ENCODE measurements at regions of chr5 and their contacts with region 1.

Region 1: DNA sequence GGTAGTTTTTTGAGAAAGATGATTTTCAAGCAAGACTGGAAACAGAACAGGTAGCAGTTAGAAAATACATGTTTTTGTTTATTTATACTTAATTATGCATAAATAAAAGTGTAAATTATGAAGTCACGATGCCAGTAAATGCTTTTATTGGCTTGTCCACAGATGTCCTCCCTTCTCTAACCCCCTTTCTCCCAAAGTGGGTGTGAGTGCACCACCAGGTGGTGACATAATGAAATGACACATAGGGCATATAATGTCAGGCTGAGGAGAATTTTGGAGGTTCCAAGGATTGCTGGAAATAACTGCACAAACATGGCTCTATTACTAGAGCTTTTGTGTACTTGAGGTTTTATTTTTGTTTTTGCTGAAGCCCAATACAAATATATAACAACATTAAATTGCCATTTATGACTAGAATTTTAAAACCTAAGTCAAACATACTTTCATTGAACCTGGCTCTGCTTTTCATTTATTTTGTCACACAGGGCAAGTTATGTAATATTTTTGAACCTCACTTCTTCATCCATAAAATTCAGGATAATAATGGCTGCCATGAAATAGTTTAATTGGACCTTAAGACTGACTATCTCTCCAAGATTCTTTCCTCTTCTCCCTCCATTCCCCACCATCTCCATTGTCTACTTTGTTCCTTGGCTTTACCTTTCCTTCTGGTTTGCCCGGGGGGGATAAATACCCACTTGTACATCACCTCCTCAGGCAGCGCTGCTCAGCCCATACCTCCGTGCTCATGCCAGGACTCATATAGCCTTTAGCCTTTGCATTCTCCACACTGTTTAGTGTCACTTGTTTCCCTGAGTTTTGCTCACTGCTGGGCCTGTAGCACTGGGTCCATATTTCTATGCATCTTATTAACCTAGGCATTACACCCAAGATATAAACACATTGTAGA is 168.8 kb downstream of the PDE4D start:
- DNase-seq: peak; percentile 41
- H3K4me3 ChIP-seq: no peak overlapping the region
- H3K27ac ChIP-seq: no peak overlapping the region
- H3K4me1 ChIP-seq: peaks cover 0 to 3% of the 10 kb centered on the region in 2 experiments; a peak in 2 of 4 replicates
- H3K27me3 ChIP-seq: no peaks in the 10 kb centered on the region
- CTCF ChIP-seq: peak; percentile 74
- EP300 ChIP-seq: no peak
- RAD21 ChIP-seq: peak; percentile 72

Region 2: GRCh38 chr5:59741599-59741998 is 16.9 kb after region 1 on chr5:
- CTCF ChIA-PET with region 1: interaction called, 14 read pairs
- POLR2A ChIA-PET with region 1: no interaction called
- DNase-seq: no peak
- H3K4me3 ChIP-seq: no peak overlapping the region
- H3K27ac ChIP-seq: no peak overlapping the region
- H3K4me1 ChIP-seq: peaks cover 8 to 14% of the 10 kb centered on the region in 2 experiments
- H3K27me3 ChIP-seq: no peaks in the 10 kb centered on the region
- CTCF ChIP-seq: no peak
- EP300 ChIP-seq: no peak
- RAD21 ChIP-seq: no peak

Region 3: GRCh38 chr5:59760798-59761348 is 36.1 kb after region 1 on chr5:
- CTCF ChIA-PET with region 1: no interaction called
- POLR2A ChIA-PET with region 1: no interaction called
- DNase-seq: no peak
- H3K4me3 ChIP-seq: no peak overlapping the region
- H3K27ac ChIP-seq: peak overlapping the region in 1 of 2 experiments; percentile 80; a peak in 2 of 4 replicates
- H3K4me1 ChIP-seq: peaks cover 5 to 15% of the 10 kb centered on the region in 2 experiments; a peak in 3 of 4 replicates
- H3K27me3 ChIP-seq: no peaks in the 10 kb centered on the region
- CTCF ChIP-seq: no peak
- EP300 ChIP-seq: no peak
- RAD21 ChIP-seq: no peak

Region 4: DNA sequence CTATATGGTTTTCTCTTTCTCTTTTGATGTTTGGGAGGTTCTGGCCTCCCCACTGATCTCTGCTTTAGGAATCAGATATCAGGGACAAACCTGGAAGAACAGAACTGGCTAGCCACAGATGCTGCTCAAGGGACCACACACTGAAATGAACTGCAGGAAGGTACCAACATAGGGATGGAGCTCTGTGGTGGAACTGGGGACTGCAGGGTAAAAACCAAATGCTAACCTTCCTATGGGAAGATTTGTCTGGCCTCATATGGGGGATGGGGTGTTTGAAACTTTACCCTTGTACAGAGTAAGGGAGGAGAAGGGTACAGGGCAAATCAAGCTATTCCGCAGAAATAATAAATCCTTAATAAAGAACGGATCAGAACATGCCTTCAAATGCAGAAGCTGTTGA is 1070.0 kb after region 1 on chr5:
- CTCF ChIA-PET with region 1: no interaction called
- POLR2A ChIA-PET with region 1: no interaction called
- DNase-seq: no peak
- H3K4me3 ChIP-seq: no peak overlapping the region
- H3K27ac ChIP-seq: no peak overlapping the region
- H3K4me1 ChIP-seq: no peaks in the 10 kb centered on the region
- H3K27me3 ChIP-seq: no peaks in the 10 kb centered on the region; the same call in 1 of the 2 replicates
- CTCF ChIP-seq: no peak
- EP300 ChIP-seq: no peak
- RAD21 ChIP-seq: no peak